ENCODE measurements at regions of chr10 and their contacts with region 1.

Region 1: GRCh38 chr10:93115661-93116383 is 42.1 kb downstream of the CYP26A1 start:
- DNase-seq: peak; percentile 82
- H3K4me3 Mint-ChIP-seq: no peak overlapping the region
- H3K27ac Mint-ChIP-seq: no peak overlapping the region
- H3K4me1 Mint-ChIP-seq: no peaks in the 10 kb centered on the region
- H3K27me3 Mint-ChIP-seq: no peaks in the 10 kb centered on the region
- CTCF ChIP-seq: peak; percentile 43

Region 2: DNA sequence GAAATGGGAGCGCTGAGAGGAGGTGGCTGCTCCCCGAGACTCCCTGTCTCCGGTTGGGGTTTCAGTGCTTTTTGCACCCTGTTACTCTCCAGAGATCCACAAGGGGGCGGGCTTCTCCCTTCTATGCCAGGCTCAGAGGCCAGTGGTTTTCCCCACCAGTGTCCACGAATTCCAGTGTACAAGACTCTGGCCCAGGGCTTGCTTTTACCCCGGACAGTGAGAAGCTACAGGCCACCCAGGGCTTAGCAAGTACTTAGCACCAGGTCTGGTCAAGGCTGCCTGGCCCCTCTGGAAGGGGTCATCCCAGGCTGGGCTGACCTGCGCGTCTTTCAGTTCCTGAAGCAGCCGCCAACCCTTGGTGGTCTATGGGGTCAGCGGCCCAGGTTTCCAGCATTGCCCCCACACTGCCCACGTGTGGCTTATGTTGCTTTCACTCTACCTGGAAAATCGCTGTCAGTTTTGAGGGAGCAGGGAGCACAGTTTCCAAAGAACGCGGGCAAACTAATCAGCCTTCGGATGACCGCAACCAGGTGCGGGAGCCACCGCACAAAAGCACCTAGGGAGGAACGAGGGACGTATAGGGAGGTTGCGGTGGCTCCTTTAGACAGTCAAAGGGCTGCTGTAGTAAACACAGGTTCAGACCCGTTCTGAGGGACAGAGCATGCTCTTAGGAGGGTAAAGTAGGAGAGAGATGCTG is 35.3 kb before region 1 on chr10:
- CTCF ChIA-PET with region 1: interaction called, 16 read pairs
- POLR2A ChIA-PET with region 1: no interaction called
- intact Hi-C with region 1: no loop called
- DNase-seq: peak; percentile 57
- H3K4me3 Mint-ChIP-seq: peak overlapping the region; percentile 29
- H3K27ac Mint-ChIP-seq: peak overlapping the region; percentile 72
- H3K4me1 Mint-ChIP-seq: peaks cover 5% of the 10 kb centered on the region
- H3K27me3 Mint-ChIP-seq: peaks cover 17% of the 10 kb centered on the region
- CTCF ChIP-seq: peak; percentile 86